Dendritic cell treated with granulocyte-macrophage colony-stimulating factor and Interleukin-4, amounts not matched to agents 40 ng/mL and 50 ng/mL, for 4 days (primary cell): ENCODE measurements at regions of chr1 and their contacts with region 1.

Region 1: DNA sequence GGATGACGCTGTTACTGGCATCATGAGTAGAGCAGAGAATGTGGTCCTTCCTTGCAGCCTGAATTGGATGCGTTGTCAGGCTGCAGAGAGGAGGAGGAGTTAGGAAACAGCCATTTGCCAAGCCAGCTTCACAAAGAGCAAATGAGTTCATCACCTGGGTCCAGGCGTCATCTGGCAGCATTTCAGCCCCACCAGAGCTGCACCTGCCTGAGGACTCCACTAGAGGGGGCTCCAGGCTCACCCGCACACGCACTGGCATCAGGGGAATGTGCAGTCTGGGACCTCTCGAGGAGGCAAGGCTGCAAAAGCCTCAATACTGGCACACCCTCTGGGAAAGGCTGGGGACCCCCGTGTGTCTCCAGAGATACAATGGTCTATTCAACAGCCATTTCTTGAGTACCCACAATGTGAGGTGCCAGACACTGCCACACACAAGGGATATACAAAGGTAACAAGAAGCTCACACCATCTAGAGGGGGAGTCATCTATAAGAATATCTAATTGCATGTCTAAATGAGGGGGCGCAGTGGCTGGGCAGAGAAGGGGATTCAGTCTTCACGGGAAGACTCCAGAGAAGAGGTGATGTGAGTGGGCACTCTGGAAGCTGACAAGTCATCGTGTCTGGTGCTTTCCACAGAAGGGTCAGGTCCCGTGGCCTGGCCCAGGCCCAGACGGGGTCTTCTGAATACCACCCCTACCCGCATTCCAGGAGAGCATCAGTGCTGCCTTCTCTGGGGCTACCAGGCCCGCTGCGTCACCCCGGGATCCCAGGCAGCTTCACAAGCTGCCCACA is 53.5 kb upstream of the CNTN2 start:
- H3K4me3 Mint-ChIP-seq: no peak overlapping the region
- H3K27ac Mint-ChIP-seq: no peak overlapping the region
- H3K4me1 Mint-ChIP-seq: peaks cover 27% of the 10 kb centered on the region
- H3K27me3 Mint-ChIP-seq: peaks cover 2% of the 10 kb centered on the region

Region 2: GRCh38 chr1:205061665-205062069 is 72.2 kb after region 1 on chr1:
- intact Hi-C with region 1: loop called (anchors 1 kb)
- H3K4me3 Mint-ChIP-seq: no peak overlapping the region
- H3K27ac Mint-ChIP-seq: no peak overlapping the region
- H3K4me1 Mint-ChIP-seq: no peaks in the 10 kb centered on the region
- H3K27me3 Mint-ChIP-seq: no peaks in the 10 kb centered on the region

Region 3: DNA sequence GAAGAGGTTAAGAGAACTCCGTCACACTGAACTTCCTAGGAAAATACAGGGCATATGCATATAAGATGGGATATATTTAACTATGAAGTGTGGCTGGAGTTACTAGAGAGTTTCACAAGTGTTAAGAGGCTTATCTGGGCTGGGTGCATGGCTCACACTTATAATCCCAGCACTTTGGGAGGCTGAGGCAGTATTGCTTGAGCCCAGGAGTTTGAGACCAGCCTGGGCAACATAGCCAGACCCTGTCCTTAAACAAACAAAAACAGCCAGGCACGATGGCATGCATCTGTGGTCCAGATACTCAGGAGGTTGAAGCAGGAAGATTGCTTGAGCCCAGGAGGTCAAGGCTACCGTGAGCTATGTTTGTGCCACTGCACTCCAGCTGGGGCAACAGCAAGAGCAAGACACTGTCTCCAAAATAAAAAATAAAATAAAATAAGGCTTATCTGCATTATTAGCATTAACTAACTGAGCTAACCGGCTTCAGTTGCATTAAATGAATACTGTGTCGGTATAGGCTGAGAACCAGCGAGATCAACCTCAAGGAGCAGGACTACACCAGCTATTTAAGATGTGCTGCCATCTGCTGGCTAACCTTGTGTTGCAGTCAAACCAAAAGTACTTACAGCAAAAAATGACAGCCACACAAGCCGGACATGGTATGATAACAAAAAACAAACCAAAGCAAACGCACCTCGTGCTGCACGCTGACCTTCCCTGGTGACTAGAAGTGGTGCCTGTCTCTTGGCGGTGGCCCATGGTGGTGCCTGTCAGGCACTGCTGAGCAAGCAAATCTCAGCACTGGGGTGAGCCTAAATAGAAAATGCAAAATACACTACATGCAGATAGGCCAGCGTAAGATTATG is 152.0 kb after region 1 on chr1:
- intact Hi-C with region 1: loop called (anchors 1 kb)
- H3K4me3 Mint-ChIP-seq: no peak overlapping the region
- H3K27ac Mint-ChIP-seq: no peak overlapping the region
- H3K4me1 Mint-ChIP-seq: peaks cover 33% of the 10 kb centered on the region
- H3K27me3 Mint-ChIP-seq: no peaks in the 10 kb centered on the region

Region 4: GRCh38 chr1:205199090-205199930 is 209.8 kb after region 1 on chr1:
- intact Hi-C with region 1: no loop called
- H3K4me3 Mint-ChIP-seq: no peak overlapping the region
- H3K27ac Mint-ChIP-seq: peak overlapping the region; percentile 22
- H3K4me1 Mint-ChIP-seq: peaks cover 42% of the 10 kb centered on the region
- H3K27me3 Mint-ChIP-seq: no peaks in the 10 kb centered on the region

Region 5: DNA sequence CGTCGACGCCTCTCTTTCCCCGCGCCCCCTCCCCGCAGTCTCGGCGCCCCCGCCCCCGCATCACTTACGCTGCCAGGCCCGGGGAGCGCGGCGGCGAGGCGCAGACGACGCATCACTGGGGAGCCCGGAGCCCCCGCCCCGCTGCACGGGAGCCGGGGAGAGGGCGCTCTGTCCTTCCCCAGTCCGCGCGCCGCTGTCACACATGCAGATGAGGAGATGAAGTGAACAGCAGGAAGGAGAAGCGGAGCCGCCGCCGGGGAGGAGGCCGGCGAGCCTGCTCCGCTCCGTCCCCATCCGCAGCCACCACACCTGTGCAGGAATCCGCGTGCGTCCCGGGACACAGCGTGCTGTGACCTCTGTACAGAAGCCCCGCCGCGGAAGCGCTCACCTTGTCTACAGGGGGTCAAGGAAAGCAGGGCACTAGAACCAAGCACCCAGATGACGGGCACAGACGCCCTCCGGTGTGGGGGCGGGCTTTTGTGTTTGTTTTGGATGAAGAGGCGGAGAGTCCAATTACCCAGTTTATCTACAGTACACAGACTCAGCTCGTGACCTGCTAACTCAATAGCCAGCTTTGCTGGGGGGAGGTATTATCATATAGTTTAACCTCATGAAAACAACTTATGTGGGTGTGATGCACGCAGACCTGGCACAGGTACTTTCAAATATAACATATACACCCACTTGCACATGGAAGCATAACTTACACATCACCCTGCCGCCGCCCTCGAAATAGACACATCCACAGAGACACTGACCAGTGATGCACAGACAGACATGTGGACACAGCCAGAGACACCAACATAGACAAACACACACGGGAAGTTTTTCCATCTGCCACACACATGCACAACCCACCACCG is 354.8 kb after region 1 on chr1:
- intact Hi-C with region 1: loop called (anchors 10 kb)
- H3K4me3 Mint-ChIP-seq: peak overlapping the region; percentile 39
- H3K27ac Mint-ChIP-seq: no peak overlapping the region
- H3K4me1 Mint-ChIP-seq: peaks cover 20% of the 10 kb centered on the region
- H3K27me3 Mint-ChIP-seq: peaks cover 69% of the 10 kb centered on the region